Kidney (tissue), 22 donors: ENCODE measurements at regions of chr17 and their contacts with region 1.

Region 1: DNA sequence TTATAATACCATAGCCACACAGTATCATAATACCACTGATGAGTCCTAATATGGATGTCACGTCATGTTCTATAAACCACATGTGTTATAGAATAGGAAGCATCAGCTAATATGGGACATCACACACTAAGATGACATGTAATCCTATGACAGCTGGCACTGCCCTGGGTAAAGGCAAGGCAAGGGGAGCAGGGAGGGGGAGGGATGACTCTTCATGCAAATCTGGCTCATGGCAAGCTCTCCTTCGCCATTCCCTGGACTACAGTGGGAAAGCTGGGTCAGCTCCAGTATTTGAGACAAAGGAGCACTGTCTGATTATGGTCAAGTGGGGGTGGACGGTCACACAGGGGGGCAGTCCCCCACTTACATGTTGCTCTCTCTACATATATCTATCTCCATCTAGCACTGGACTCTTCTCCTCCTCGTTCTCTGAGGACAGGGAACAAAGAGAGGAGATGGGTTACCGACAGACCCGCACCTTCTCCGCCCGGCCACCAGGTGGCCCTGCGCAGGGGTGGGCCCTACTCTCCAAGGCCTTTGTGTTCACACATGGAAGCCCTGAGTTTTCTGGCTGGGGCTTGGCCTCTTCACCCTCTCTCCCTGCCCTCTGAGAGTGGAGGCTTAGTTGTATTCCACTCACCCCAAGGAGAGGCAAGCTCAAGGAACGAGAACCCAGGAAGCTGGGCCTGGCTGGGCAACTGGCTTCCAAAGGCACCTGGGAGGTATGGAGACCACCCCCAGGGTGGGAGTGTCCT is 23.4 kb upstream of the MPO start:
- DNase-seq: peak; percentile 33 to 62 (median 39)
- H3K4me3 ChIP-seq: no peak overlapping the region
- H3K27ac ChIP-seq: no peak overlapping the region
- H3K4me1 ChIP-seq: no peaks in the 10 kb centered on the region
- H3K27me3 ChIP-seq: no peaks in the 10 kb centered on the region
- CTCF ChIP-seq: peak; percentile 64

Region 2: DNA sequence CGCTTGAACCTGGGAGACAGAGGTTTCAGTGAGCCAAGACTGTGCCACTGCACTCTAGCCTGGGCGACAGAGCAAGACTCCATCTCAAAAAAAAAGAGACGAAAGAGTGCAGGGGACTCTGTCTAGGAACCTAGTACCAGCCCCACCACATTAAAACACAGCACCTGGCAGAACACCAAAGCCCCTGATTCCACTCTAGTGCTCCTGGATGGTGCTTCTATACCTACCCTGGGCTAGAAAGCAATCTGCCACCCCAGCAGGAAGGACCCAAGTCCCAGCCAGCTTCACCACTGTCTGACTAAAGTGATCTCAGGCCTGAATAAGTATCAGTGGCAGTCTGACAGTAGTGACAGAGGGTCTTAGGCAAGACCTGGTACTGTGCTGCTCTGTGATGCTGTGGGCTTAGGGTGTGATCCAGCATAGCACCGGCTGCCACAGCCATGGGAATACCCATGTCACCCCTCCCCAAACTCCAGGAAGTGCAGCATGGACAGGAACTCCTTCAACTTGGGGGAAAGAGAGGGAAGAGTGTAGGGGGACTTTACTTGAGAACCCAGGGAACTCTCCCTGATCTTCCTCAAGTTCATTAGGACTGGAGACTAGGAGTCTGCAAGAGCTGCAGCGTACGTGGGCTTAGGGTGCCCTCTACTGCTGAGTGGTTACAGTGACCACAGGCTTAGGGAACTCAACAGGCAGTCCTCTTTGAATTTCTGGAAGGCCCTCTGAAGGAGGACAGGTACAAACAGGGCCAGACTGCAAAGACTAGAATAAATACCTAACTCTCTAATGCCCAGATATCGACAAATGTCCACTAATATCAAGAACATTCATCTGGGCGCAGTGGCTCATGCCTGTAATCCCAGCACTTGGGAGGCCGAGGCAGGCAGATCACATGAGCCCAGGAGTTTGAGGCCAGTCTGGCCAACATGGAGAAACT is 143.2 kb after region 1 on chr17:
- intact Hi-C with region 1: loop called (anchors 10 kb)
- DNase-seq: peak in 4 of 5 donors; percentile 56 to 78 (median 75)
- H3K4me3 ChIP-seq: no peak overlapping the region
- H3K27ac ChIP-seq: no peak overlapping the region
- H3K4me1 ChIP-seq: no peaks in the 10 kb centered on the region
- H3K27me3 ChIP-seq: no peaks in the 10 kb centered on the region
- CTCF ChIP-seq: peak; percentile 76